ENCODE measurements at regions of chr19 and their contacts with region 1.

Region 1: GRCh38 chr19:39474139-39474622 is 6.5 kb upstream of the TIMM50 start:
- DNase-seq: peak; percentile 64 to 89
- ATAC-seq: peak; percentile 58 to 87; a peak in 5 of 6 replicates
- H3K4me3 ChIP-seq: no peak overlapping the region
- H3K27ac ChIP-seq: no peak overlapping the region
- H3K4me1 ChIP-seq: peaks cover 13% of the 10 kb centered on the region
- CTCF ChIP-seq: peak; percentile 97
- EP300 ChIP-seq: no peak
- POLR2A ChIP-seq: no peak
- RAD21 ChIP-seq: peak; percentile 61 to 69; a peak in 4 of 5 replicates

Region 2: DNA sequence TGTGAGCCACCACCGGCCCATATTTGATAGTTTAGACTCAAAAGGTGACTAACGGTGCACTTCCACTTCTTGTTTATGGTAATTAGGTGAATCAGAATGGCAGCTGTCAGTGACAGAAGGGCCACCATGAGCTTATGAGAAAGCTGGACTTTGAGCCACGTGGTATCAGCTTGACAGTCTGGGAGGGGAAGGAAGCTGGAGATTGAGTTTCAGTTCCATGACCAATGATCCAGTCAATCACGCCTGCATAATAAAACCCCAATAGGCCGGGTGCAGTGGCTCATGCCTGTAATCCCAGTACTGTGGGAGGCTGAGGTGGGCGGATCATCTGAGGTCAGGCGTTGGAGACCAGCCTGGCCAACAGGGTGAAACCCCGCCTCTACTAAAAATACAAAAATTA is 50.3 kb after region 1 on chr19:
- CTCF ChIA-PET with region 1: interaction called, 17 read pairs
- POLR2A ChIA-PET with region 1: no interaction called
- DNase-seq: no peak
- ATAC-seq: no peak; a peak in 1 of 6 replicates
- H3K4me3 ChIP-seq: no peak overlapping the region
- H3K27ac ChIP-seq: no peak overlapping the region
- H3K4me1 ChIP-seq: peaks cover 5% of the 10 kb centered on the region; the same call in 2 of the 3 replicates
- CTCF ChIP-seq: no peak
- EP300 ChIP-seq: no peak
- POLR2A ChIP-seq: no peak
- RAD21 ChIP-seq: no peak

Measured in A549 (cell line).